ENCODE measurements at regions of chr2 and their contacts with region 1.

Region 1: GRCh38 chr2:175181104-175181876 is at the start of gene ATP5MC3:
- DNase-seq: peak; percentile 96
- ATAC-seq: peak; percentile 95
- H3K4me3 Mint-ChIP-seq: peak within 1 kb of the TSS; percentile 95
- H3K27ac Mint-ChIP-seq: peak within 1 kb of the TSS; percentile 94
- H3K4me1 Mint-ChIP-seq: peaks cover 32% of the 10 kb centered on the region
- H3K27me3 Mint-ChIP-seq: no peaks in the 10 kb centered on the region
- total RNA-seq, gene ATP5MC3: 244 to 386 TPM

Region 2: GRCh38 chr2:174717273-174717672 is 464.0 kb before region 1 on chr2:
- CTCF ChIA-PET with region 1: no interaction called
- POLR2A ChIA-PET with region 1: no interaction called
- intact Hi-C with region 1: no loop called
- DNase-seq: peak; percentile 24
- ATAC-seq: peak; percentile 83
- H3K4me3 Mint-ChIP-seq: no peak overlapping the region
- H3K27ac Mint-ChIP-seq: no peak overlapping the region
- H3K4me1 Mint-ChIP-seq: peaks cover 28% of the 10 kb centered on the region
- H3K27me3 Mint-ChIP-seq: no peaks in the 10 kb centered on the region

Region 3: GRCh38 chr2:175030380-175031271 is 150.7 kb before region 1 on chr2:
- CTCF ChIA-PET with region 1: no interaction called
- POLR2A ChIA-PET with region 1: no interaction called
- intact Hi-C with region 1: loop called in 1 of 2 experiments (anchors 10 kb)
- DNase-seq: peak; percentile 50
- ATAC-seq: no peak
- H3K4me3 Mint-ChIP-seq: no peak overlapping the region
- H3K27ac Mint-ChIP-seq: no peak overlapping the region
- H3K4me1 Mint-ChIP-seq: no peaks in the 10 kb centered on the region
- H3K27me3 Mint-ChIP-seq: no peaks in the 10 kb centered on the region

Region 4: DNA sequence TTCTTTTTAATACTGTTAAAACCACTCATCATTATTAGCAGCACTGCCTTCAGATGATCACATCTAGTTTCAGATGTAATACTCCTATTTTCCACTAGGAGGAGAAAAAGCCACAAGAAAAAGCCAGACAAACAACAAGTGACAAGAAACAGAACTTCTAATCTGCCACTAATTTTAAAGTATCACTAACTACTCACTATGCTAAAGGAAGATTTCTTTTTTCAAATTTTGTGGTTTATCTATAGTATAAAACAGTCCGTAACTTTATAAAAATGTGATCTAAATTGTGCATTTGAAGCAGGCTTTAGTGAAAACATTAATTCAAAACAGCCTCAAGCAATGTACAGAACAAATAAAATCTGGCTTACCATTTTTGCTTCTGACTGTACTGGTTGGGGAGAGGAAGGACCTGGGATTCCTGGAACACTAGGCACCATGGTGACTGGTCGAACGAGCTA is 70.1 kb before region 1 on chr2:
- CTCF ChIA-PET with region 1: interaction called, 4 read pairs
- POLR2A ChIA-PET with region 1: no interaction called
- intact Hi-C with region 1: loop called (anchors 2 to 5 kb)
- DNase-seq: no peak
- ATAC-seq: peak; percentile 44
- H3K4me3 Mint-ChIP-seq: no peak overlapping the region
- H3K27ac Mint-ChIP-seq: no peak overlapping the region
- H3K4me1 Mint-ChIP-seq: peaks cover 5% of the 10 kb centered on the region
- H3K27me3 Mint-ChIP-seq: no peaks in the 10 kb centered on the region

Region 5: GRCh38 chr2:175227393-175227792 is 46.1 kb after region 1 on chr2:
- CTCF ChIA-PET with region 1: no interaction called
- POLR2A ChIA-PET with region 1: no interaction called
- intact Hi-C with region 1: loop called in 1 of 2 experiments (anchors 2 kb)
- DNase-seq: no peak
- ATAC-seq: peak; percentile 89
- H3K4me3 Mint-ChIP-seq: no peak overlapping the region
- H3K27ac Mint-ChIP-seq: peak overlapping the region; percentile 25
- H3K4me1 Mint-ChIP-seq: peaks cover 15% of the 10 kb centered on the region
- H3K27me3 Mint-ChIP-seq: peaks cover 11% of the 10 kb centered on the region

Region 6: GRCh38 chr2:176001916-176002687 is 820.8 kb after region 1 on chr2 and contains the start of gene LNPK:
- CTCF ChIA-PET with region 1: no interaction called
- POLR2A ChIA-PET with region 1: no interaction called
- intact Hi-C with region 1: loop called in 1 of 2 experiments (anchors 2 kb)
- DNase-seq: peak; percentile 95
- ATAC-seq: peak; percentile 93
- H3K4me3 Mint-ChIP-seq: peak within 1 kb of the TSS; percentile 99
- H3K27ac Mint-ChIP-seq: peak within 1 kb of the TSS; percentile 95
- H3K4me1 Mint-ChIP-seq: peaks cover 19% of the 10 kb centered on the region
- H3K27me3 Mint-ChIP-seq: no peaks in the 10 kb centered on the region
- total RNA-seq, gene LNPK: 27.3 to 36.0 TPM

Measured in activated CD4-positive, alpha-beta T cell treated with anti-CD3 and anti-CD28 coated beads for 36 hours (primary cell).